ENCODE measurements at regions of chr10 and their contacts with region 1.

Region 1: GRCh38 chr10:3467052-3467951 is 294.7 kb upstream of the PITRM1 start:
- DNase-seq: peak; percentile 29
- H3K4me3 Mint-ChIP-seq: peak overlapping the region; percentile 64
- H3K27ac Mint-ChIP-seq: peak overlapping the region; percentile 63
- H3K4me1 Mint-ChIP-seq: peaks cover 46% of the 10 kb centered on the region
- H3K27me3 Mint-ChIP-seq: no peaks in the 10 kb centered on the region

Region 2: DNA sequence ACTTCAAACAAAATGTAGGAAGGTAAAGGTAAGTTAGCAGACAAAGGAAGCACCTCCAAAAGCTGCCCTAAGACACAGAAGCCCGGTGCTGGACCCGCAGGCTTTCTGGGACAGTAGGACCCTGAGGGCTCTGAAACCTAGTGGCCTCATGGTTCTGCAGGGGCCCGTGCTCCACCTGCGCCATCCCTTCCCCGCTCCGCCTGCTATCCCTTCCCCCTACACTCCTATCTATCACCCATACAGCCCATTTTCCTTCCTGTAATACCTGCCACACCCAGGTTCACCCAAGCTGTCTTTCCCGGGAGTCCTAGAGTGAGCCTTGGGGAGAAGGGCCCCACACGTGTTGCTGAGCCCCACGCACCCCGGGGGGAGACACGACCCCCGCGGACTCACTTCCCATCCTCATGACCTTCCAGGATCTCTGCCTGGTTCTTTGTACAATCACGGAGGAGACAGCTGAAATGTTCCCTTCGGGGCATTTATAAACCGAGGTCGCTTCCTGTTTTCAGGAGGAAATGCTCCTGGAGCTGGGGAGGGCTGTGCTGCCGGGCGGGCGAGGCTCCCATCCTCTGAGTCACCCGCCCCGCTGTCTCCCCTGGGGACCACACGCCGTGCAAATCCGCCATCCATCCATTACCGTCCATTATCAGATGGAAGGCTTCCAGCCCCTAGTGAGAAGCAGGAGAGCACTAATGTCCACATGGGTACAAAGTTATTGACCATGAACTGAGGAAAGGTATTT is 43.0 kb before region 1 on chr10:
- CTCF ChIA-PET with region 1: no interaction called
- POLR2A ChIA-PET with region 1: no interaction called
- intact Hi-C with region 1: loop called (anchors 5 kb)
- DNase-seq: no peak
- H3K4me3 Mint-ChIP-seq: no peak overlapping the region
- H3K27ac Mint-ChIP-seq: no peak overlapping the region
- H3K4me1 Mint-ChIP-seq: peaks cover 29% of the 10 kb centered on the region
- H3K27me3 Mint-ChIP-seq: peaks cover 2% of the 10 kb centered on the region

Region 3: GRCh38 chr10:3605882-3606281 is 138.6 kb after region 1 on chr10:
- CTCF ChIA-PET with region 1: no interaction called
- POLR2A ChIA-PET with region 1: no interaction called
- intact Hi-C with region 1: loop called (anchors 5 kb)
- DNase-seq: peak; percentile 20
- H3K4me3 Mint-ChIP-seq: no peak overlapping the region
- H3K27ac Mint-ChIP-seq: peak overlapping the region; percentile 55
- H3K4me1 Mint-ChIP-seq: peaks cover 18% of the 10 kb centered on the region
- H3K27me3 Mint-ChIP-seq: no peaks in the 10 kb centered on the region